ENCODE measurements at regions of chr2 and their contacts with region 1.

Region 1: DNA sequence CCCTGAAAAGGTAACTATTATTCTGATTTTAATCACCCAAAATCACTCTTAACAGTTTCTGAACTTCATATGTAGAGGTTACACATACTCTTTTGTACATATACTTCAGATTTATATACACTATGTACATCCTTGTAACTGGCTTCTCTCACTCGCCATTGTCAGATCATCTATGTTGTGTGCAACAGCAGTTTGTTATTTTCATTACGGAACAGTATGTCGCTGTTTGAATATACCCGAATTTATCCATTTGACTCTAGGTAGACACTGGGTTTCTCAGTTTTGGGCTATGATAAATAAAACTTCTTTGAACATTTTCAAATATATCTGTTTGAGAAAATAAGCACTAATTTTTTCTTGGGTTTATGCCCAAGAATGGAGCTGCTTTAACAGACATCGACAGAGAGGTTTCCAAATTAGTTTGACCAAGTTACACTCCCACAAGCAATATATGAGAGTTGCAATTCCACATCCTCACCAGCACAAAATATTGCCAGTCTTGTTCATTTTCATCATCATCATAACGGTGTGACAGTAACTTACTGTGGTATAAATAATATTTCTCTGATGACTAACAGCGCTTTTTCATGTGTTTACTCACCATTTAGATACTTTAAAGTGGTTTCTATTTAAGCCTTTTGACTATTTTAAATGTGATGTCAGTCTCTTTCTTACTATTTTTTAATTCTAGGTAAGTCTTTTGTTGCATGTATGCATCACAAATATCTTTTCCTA is 80.9 kb downstream of the SMC6 start:
- DNase-seq: no peak
- ATAC-seq: no peak
- H3K4me3 ChIP-seq: no peak overlapping the region
- H3K4me3 Mint-ChIP-seq: no peak overlapping the region
- H3K27ac ChIP-seq: no peak overlapping the region
- H3K27ac Mint-ChIP-seq: no peak overlapping the region
- H3K4me1 ChIP-seq: no peaks in the 10 kb centered on the region
- H3K4me1 Mint-ChIP-seq: no peaks in the 10 kb centered on the region
- H3K27me3 ChIP-seq: no peaks in the 10 kb centered on the region
- H3K27me3 Mint-ChIP-seq: no peaks in the 10 kb centered on the region

Region 2: GRCh38 chr2:17646081-17646554 is 26.6 kb before region 1 on chr2:
- CTCF ChIA-PET with region 1: interaction called, 26 to 84 read pairs
- POLR2A ChIA-PET with region 1: no interaction called
- DNase-seq: peak in 18 of 35 experiments; percentile 1 to 59 (median 10)
- ATAC-seq: peak in 2 of 4 experiments; percentile 44 to 56
- H3K4me3 ChIP-seq: no peak overlapping the region
- H3K4me3 Mint-ChIP-seq: no peak overlapping the region
- H3K27ac ChIP-seq: no peak overlapping the region
- H3K27ac Mint-ChIP-seq: no peak overlapping the region
- H3K4me1 ChIP-seq: no peaks in the 10 kb centered on the region
- H3K4me1 Mint-ChIP-seq: no peaks in the 10 kb centered on the region
- H3K27me3 ChIP-seq: no peaks in the 10 kb centered on the region
- H3K27me3 Mint-ChIP-seq: no peaks in the 10 kb centered on the region

Region 3: DNA sequence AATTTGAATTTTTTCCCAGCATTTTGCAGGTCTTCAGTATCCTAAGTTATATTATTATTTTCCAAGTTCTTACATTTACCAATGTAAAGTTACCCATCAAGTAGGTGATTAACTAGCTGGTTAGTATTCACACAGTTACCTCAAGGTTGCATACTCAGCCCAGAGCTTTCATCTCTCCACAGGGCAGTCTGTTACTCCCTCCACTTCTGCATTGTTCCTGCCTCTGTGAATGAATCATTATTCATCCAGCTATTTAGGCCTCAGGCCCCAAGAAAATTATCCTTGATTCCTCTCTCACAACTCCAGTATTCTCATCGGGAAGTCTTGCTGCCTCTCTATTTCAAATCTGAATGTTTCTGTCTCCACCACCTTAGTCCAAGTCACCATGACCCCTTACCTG is 11.3 kb before region 1 on chr2:
- CTCF ChIA-PET with region 1: interaction called, 3 to 23 read pairs
- POLR2A ChIA-PET with region 1: interaction called in 1 of 2 experiments, 7 read pairs
- DNase-seq: no peak
- ATAC-seq: no peak
- H3K4me3 ChIP-seq: no peak overlapping the region
- H3K4me3 Mint-ChIP-seq: no peak overlapping the region
- H3K27ac ChIP-seq: no peak overlapping the region
- H3K27ac Mint-ChIP-seq: no peak overlapping the region
- H3K4me1 ChIP-seq: no peaks in the 10 kb centered on the region
- H3K4me1 Mint-ChIP-seq: no peaks in the 10 kb centered on the region
- H3K27me3 ChIP-seq: no peaks in the 10 kb centered on the region
- H3K27me3 Mint-ChIP-seq: no peaks in the 10 kb centered on the region

Region 4: DNA sequence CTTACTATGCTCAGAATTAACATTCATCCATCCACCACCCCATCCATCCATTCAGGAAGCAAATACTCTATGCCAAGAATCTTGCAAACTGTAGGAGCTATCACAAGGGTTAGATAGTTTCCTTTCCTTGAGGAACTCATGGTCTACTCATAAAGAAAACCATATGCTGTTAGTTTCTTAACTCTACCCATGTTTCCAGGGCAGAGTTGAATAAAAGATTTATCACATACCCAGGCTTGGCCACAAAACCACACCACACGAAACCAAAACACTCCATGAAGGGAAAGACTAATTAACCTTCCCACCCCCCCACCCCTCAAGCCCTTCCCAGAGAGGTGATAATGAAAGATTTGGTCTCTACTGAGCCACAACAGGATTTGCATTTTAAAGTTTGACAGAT is 119.8 kb after region 1 on chr2:
- CTCF ChIA-PET with region 1: interaction called in 1 of 2 experiments, 10 read pairs
- POLR2A ChIA-PET with region 1: no interaction called
- DNase-seq: no peak
- ATAC-seq: no peak
- H3K4me3 ChIP-seq: no peak overlapping the region
- H3K4me3 Mint-ChIP-seq: no peak overlapping the region
- H3K27ac ChIP-seq: no peak overlapping the region
- H3K27ac Mint-ChIP-seq: no peak overlapping the region
- H3K4me1 ChIP-seq: no peaks in the 10 kb centered on the region
- H3K4me1 Mint-ChIP-seq: no peaks in the 10 kb centered on the region
- H3K27me3 ChIP-seq: peaks cover 0 to 9% of the 10 kb centered on the region in 2 experiments
- H3K27me3 Mint-ChIP-seq: peaks cover 32 to 38% of the 10 kb centered on the region in 2 donors